Activated B cell treated with CpG ODN at 0.5 μM for 24 hours (primary cell): ENCODE measurements at regions of chr5 and their contacts with region 1.

Region 1: GRCh38 chr5:78964887-78965286 is 20.2 kb downstream of the ARSB start:
- DNase-seq: no peak
- ATAC-seq: peak; percentile 62
- H3K4me3 Mint-ChIP-seq: no peak overlapping the region
- H3K27ac Mint-ChIP-seq: no peak overlapping the region
- H3K4me1 Mint-ChIP-seq: peaks cover 3% of the 10 kb centered on the region
- H3K27me3 Mint-ChIP-seq: no peaks in the 10 kb centered on the region
- CTCF ChIP-seq: no peak

Region 2: GRCh38 chr5:78320401-78320800 is 644.5 kb before region 1 on chr5:
- CTCF ChIA-PET with region 1: interaction called, 4 read pairs
- POLR2A ChIA-PET with region 1: no interaction called
- intact Hi-C with region 1: loop called (anchors 1 kb)
- DNase-seq: no peak
- ATAC-seq: no peak
- H3K4me3 Mint-ChIP-seq: no peak overlapping the region
- H3K27ac Mint-ChIP-seq: no peak overlapping the region
- H3K4me1 Mint-ChIP-seq: no peaks in the 10 kb centered on the region
- H3K27me3 Mint-ChIP-seq: no peaks in the 10 kb centered on the region
- CTCF ChIP-seq: no peak

Region 3: DNA sequence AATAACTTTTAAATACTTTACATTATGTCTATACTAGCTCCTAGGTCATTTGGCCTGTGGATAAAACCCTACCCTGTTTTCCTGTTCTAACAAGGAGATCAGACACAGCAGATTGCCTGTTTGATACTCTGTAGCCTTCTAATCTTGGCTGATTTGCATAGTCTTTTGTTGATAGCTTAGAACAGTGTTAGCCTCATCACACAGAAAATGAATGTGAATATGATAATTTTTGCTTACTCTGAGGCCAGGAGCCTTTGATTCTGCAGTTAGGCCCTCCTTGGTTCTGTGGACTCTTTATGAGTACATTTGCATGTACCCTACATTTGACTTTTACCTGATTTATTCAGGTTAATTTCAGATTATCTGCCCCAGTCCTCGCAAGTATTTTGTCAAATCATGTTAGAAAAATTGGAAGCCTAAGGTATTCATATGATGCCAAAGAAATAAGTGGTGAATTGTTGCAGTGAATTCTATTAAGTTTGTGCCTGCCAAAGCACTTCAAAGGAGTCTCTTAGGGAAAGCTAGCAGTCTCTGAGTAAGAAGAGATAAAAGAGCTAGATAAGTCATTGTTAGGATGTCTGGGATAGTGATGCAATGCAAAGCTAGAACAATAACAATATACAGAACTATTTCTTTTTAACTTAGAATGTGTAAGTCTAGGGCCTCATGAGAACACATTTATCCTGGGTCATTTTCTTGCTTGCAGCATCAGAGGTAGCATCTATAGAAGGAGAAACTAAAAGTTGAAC is 548.0 kb before region 1 on chr5:
- CTCF ChIA-PET with region 1: no interaction called
- POLR2A ChIA-PET with region 1: no interaction called
- intact Hi-C with region 1: no loop called
- DNase-seq: no peak
- ATAC-seq: no peak
- H3K4me3 Mint-ChIP-seq: no peak overlapping the region
- H3K27ac Mint-ChIP-seq: no peak overlapping the region
- H3K4me1 Mint-ChIP-seq: no peaks in the 10 kb centered on the region
- H3K27me3 Mint-ChIP-seq: no peaks in the 10 kb centered on the region
- CTCF ChIP-seq: no peak

Region 4: GRCh38 chr5:78537821-78538220 is 427.1 kb before region 1 on chr5:
- CTCF ChIA-PET with region 1: interaction called, 35 read pairs
- POLR2A ChIA-PET with region 1: interaction called, 3 read pairs
- intact Hi-C with region 1: loop called (anchors 1 kb)
- DNase-seq: no peak
- ATAC-seq: peak; percentile 80
- H3K4me3 Mint-ChIP-seq: no peak overlapping the region
- H3K27ac Mint-ChIP-seq: no peak overlapping the region
- H3K4me1 Mint-ChIP-seq: peaks cover 10% of the 10 kb centered on the region
- H3K27me3 Mint-ChIP-seq: no peaks in the 10 kb centered on the region
- CTCF ChIP-seq: no peak

Region 5: GRCh38 chr5:78555870-78556269 is 409.0 kb before region 1 on chr5:
- CTCF ChIA-PET with region 1: interaction called, 6 read pairs
- POLR2A ChIA-PET with region 1: no interaction called
- intact Hi-C with region 1: loop called (anchors 5 kb)
- DNase-seq: no peak
- ATAC-seq: no peak
- H3K4me3 Mint-ChIP-seq: no peak overlapping the region
- H3K27ac Mint-ChIP-seq: no peak overlapping the region
- H3K4me1 Mint-ChIP-seq: peaks cover 23% of the 10 kb centered on the region
- H3K27me3 Mint-ChIP-seq: no peaks in the 10 kb centered on the region
- CTCF ChIP-seq: no peak

Region 6: DNA sequence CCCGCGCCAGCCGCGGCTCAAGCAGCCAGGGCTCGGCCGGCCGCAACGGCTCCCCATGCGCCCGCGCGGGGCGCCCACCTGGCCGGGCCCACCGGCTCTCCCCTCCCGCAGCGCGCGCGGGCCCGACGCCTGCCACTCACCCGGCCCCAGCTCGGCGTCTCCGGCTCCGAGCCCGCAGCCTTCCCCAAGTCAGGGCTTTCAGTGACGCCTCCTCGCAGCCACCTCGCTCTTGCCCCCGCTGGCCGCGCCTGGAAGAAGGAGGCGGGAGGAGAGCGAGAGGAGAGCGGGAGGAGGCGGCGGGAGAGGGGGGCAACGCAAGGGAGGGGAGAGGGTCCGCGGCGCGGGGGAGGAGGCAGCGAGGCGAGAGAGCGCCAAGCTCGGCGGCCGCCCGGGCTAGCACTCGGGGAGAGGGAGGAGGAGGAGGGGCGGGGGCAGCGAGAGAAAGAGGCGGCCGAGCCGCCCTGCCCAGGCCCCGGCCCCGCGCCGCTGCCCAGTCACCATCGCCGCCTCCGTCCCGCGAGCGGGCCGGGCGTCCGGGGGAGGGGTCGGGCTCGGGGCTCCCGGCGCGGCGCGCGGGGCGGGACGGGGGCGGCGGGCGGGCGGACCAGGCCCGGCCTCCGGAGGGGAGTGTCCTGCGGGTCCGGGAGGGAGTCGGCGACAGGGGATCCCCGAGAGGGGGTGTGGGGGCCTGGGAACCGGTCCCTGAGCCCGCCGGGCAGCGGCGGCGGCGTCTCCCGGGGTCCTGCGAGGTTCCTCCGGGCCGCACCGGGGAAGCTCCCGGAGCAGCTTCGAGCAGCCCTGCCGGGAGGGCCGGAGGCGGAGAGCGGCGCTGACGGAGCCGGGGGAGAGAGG is 316.3 kb before region 1 on chr5 and contains the start of gene LHFPL2:
- CTCF ChIA-PET with region 1: no interaction called
- POLR2A ChIA-PET with region 1: no interaction called
- intact Hi-C with region 1: loop called (anchors 5 kb)
- DNase-seq: peak; percentile 63
- ATAC-seq: peak; percentile 69
- H3K4me3 Mint-ChIP-seq: peak within 1 kb of the TSS; percentile 83
- H3K27ac Mint-ChIP-seq: peak within 1 kb of the TSS; percentile 73
- H3K4me1 Mint-ChIP-seq: peaks cover 25% of the 10 kb centered on the region
- H3K27me3 Mint-ChIP-seq: no peaks in the 10 kb centered on the region
- CTCF ChIP-seq: no peak
- total RNA-seq, gene LHFPL2: 11.0 and 12.0 TPM in 2 replicates

Region 7: GRCh38 chr5:78886341-78887230 is 78.3 kb before region 1 on chr5:
- CTCF ChIA-PET with region 1: interaction called, 30 read pairs
- POLR2A ChIA-PET with region 1: no interaction called
- intact Hi-C with region 1: loop called (anchors 1 kb)
- DNase-seq: no peak
- ATAC-seq: no peak
- H3K4me3 Mint-ChIP-seq: no peak overlapping the region
- H3K27ac Mint-ChIP-seq: peak overlapping the region; percentile 2
- H3K4me1 Mint-ChIP-seq: peaks cover 39% of the 10 kb centered on the region
- H3K27me3 Mint-ChIP-seq: no peaks in the 10 kb centered on the region
- CTCF ChIP-seq: peak; percentile 73

Region 8: DNA sequence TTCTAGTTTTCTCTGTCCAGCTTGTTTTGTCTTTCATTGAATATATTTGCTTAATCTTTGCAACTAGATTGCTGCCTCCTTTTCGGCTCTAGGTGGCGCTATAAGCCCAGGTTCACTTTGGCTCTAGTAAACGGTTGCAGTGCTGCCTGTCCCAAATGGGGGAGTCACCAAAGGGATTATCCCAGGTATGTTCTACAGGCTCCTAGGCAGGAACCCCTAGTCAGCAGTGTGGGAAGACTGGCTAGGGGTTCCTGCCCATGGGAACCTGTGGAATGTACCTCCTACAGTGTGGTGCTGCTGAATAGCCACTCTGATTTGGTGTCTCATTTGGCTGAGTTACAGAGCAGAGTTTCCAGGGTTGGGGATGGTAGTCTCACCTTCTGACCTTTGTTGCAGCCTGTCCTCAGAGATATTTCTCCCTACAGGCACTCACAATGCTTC is 64.9 kb before region 1 on chr5:
- CTCF ChIA-PET with region 1: interaction called, 12 read pairs
- POLR2A ChIA-PET with region 1: no interaction called
- intact Hi-C with region 1: no loop called
- DNase-seq: no peak
- ATAC-seq: no peak
- H3K4me3 Mint-ChIP-seq: no peak overlapping the region
- H3K27ac Mint-ChIP-seq: no peak overlapping the region
- H3K4me1 Mint-ChIP-seq: peaks cover 3% of the 10 kb centered on the region
- H3K27me3 Mint-ChIP-seq: no peaks in the 10 kb centered on the region
- CTCF ChIP-seq: no peak